Colonic mucosa (tissue), 4 donors: ENCODE measurements at regions of chr3 and their contacts with region 1.

Region 1: DNA sequence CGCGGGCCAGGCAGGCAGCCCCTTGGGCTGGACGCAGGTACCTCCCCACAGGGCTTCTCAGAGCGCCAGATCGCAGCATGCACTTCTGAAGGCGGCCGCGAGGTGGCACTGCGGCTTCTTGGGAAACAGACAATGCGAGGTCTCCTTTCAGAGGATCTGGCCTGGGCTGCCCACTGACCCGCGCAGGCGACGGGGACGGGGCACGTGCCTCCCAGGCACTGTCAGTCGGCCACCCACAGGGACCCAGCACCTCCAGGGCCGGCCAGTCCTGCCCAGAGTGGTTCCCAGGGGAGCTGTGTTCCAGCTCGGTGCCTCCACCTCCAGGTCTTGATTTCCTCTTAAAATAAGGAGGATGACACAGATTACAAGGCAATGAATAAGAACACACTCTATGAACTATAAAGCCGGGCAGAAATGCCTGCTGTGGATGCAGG is 24.4 kb upstream of the TXNRD3 start:
- DNase-seq: peak; percentile 85
- H3K4me3 ChIP-seq: no peak overlapping the region
- H3K27ac ChIP-seq: no peak overlapping the region
- H3K4me1 ChIP-seq: no peaks in the 10 kb centered on the region
- H3K27me3 ChIP-seq: no peaks in the 10 kb centered on the region
- CTCF ChIP-seq: peak; percentile 99

Region 2: DNA sequence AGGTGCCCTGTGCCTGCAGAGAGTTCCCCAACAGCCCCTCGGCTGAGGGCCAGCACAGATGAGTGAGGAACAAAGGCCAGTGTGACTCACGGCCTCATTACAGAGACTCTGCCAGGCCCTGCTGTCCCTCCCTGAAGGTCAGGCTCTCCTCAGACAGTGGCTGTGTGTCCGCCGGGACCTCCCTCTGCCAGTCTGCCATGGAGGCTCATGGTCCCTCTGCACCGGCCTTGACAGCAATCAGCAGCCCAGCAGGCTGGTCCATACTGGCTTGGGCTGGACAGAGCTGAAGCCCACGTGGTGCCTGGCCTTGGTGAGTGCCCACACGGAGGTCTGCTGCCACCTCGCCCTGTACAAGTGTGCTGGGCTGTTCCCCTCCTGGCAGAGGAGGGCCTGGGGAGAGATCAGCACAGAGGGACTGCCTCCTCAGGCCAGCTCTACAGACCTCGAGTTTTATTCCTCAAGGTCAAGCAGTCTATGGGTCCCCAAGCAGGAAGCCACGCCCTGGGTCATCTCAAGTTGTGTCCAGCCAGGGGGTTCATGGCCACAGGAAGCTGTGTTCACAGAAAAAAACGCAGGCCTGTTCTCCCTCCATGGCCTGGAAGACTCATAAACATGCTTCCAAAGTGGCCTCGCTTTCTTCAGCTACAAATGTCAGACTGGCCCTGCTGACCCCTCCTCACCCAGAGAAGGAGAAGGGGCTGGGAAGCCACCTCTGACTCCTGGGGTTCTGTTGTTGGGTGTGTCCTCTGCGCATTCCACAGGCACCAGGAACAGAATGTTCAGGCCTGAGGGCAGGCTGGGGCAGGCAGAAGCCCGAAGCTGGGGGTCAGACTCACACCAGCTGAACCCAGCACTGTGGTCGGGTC is 622.4 kb before region 1 on chr3:
- intact Hi-C with region 1: no loop called
- DNase-seq: no peak
- H3K4me3 ChIP-seq: no peak overlapping the region
- H3K27ac ChIP-seq: no peak overlapping the region
- H3K4me1 ChIP-seq: no peaks in the 10 kb centered on the region
- H3K27me3 ChIP-seq: no peaks in the 10 kb centered on the region
- CTCF ChIP-seq: no peak

Region 3: GRCh38 chr3:126509597-126510307 is 169.6 kb before region 1 on chr3:
- intact Hi-C with region 1: no loop called
- DNase-seq: no peak
- H3K4me3 ChIP-seq: no peak overlapping the region
- H3K27ac ChIP-seq: no peak overlapping the region
- H3K4me1 ChIP-seq: no peaks in the 10 kb centered on the region
- H3K27me3 ChIP-seq: no peaks in the 10 kb centered on the region
- CTCF ChIP-seq: no peak

Region 4: DNA sequence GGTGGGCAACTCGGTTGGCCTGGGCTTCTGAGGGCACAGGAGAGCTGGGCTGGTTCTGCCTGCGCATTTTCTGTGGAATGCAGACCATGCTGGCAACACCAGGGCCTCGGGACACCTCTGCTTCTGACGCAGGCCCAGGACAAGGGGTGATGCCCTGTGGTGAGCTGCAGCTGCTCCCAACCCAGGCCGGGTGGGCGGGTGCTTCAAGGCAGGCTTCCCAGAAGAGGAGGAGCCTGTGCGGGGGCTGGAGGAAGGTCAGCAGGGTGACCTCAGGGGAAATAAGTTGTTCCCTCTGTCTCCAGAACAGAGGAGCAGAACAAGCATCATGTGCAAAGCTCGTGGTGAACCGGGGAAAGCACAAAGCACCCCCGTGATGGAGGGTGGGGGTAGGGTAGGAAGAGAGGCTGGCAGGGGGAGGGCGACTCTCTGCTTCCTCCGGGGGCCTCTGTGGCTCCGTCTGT is 292.6 kb after region 1 on chr3:
- intact Hi-C with region 1: loop called (anchors 10 kb)
- DNase-seq: peak; percentile 66
- H3K4me3 ChIP-seq: no peak overlapping the region
- H3K27ac ChIP-seq: no peak overlapping the region
- H3K4me1 ChIP-seq: no peaks in the 10 kb centered on the region
- H3K27me3 ChIP-seq: no peaks in the 10 kb centered on the region
- CTCF ChIP-seq: no peak

Region 5: GRCh38 chr3:127172781-127173515 is 493.6 kb after region 1 on chr3:
- intact Hi-C with region 1: loop called (anchors 10 kb)
- DNase-seq: no peak
- H3K4me3 ChIP-seq: no peak overlapping the region
- H3K27ac ChIP-seq: no peak overlapping the region
- H3K4me1 ChIP-seq: no peaks in the 10 kb centered on the region
- H3K27me3 ChIP-seq: no peaks in the 10 kb centered on the region
- CTCF ChIP-seq: no peak

Region 6: DNA sequence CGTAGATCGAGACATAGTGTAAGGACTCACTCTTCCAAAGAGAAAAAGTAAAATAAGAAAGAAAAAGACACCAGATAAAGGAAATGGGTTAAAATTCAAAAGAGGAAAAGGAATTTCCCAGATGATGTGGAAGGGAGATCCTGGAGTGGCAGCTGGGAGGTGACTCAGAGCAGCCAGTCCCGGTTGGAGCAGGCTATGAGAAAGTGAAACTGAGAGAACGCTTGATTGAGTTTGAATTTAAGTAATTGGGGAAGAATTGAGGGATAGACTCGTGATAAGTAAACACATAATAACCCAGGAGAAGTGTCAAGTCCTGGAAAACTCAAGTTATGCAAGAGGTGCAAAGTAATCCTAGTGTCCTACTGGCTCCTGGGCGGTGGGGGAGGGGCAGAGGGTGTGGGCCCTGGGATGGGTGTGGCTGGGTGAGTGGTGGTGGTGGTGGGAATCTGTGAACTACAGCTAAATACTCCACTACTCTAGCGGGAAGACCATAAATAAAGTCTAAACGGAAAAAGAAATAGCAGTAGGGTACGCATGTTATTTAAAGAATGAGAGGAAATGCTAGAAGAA is 607.3 kb after region 1 on chr3:
- intact Hi-C with region 1: no loop called
- DNase-seq: no peak
- H3K4me3 ChIP-seq: no peak overlapping the region
- H3K27ac ChIP-seq: no peak overlapping the region
- H3K4me1 ChIP-seq: no peaks in the 10 kb centered on the region
- H3K27me3 ChIP-seq: no peaks in the 10 kb centered on the region
- CTCF ChIP-seq: no peak

Region 7: DNA sequence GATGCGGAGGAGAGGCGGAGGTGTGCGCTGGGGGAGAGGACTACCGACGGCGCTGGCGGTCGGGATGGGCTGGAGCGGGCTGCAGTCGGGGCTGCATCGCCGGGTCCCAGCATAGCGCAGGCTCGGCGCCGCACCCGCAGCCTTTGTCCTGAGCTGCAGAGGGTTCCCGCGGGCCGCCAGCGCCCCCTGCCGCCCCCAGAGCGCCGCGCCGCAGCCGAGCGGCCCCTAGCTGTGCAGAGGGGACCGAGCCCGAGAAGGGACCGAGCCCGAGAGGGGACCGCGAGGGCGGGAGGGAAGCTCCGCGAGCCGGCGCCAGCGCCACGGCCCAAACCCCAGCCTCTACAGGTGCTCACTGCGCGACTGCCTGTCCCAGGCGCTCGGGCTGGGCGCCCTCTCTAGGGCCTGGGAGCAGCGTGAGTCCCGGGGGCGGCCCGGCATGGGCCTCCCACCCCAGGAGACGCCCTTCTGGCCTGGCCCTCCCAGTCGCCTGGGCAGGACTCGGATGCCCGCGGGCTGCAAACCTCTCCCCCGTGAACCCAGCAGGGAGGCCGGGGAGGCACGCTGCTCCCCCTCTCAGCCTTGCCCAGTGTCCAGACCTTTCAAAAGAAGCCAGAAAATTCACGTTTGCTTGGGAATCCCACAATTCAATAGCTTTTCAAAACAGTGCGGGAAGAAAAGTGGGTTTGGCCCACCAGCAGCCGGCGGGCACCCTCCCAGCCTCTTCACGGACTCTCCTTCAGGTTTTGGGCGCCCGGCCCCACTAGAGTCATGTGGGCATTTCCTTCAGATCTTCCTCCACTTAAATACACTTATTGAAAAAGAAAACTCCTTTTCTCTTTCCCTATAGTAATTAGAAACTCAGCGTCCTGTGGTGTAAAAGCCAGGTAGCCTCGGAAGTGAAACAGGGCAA is 776.5 kb after region 1 on chr3:
- intact Hi-C with region 1: loop called (anchors 5 kb)
- DNase-seq: peak; percentile 64
- H3K4me3 ChIP-seq: peak overlapping the region; percentile 18
- H3K27ac ChIP-seq: no peak overlapping the region
- H3K4me1 ChIP-seq: peaks cover 12% of the 10 kb centered on the region
- H3K27me3 ChIP-seq: peaks cover 17% of the 10 kb centered on the region
- CTCF ChIP-seq: peak; percentile 88

Region 8: DNA sequence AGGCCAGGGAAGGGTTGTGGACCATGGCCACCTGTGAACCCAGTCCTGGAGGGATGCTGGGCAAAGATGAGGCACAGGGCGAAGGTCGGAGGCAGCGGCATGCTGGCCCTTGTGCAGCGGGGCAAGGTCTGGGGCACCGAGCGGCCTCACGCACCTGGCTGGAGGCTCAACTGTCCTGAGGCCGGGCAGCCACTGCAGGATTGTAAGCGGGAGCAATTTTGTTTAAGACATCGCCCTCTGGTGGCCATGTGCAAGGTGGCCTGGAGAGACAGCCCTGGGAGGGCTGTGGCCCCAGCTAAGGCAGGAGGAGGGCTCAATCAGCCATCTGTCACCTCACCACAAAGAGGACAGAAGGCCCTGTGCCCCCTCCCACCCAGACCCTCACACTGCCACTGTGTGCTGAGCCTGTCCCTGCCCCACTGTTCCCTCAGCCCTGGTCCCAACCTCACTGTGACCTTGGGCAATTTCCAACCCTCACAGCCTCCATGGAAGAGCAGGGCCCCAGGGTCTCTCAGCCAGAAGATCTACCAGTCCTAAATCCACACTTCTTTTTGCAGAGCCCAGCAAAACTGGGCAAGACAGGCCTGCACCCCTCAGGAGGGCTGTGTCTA is 865.0 kb after region 1 on chr3:
- intact Hi-C with region 1: loop called (anchors 10 kb)
- DNase-seq: peak; percentile 80
- H3K4me3 ChIP-seq: no peak overlapping the region
- H3K27ac ChIP-seq: no peak overlapping the region
- H3K4me1 ChIP-seq: peaks cover 13% of the 10 kb centered on the region
- H3K27me3 ChIP-seq: no peaks in the 10 kb centered on the region
- CTCF ChIP-seq: peak; percentile 86